A673 (cell line): ENCODE measurements at regions of chr1 and their contacts with region 1.

Region 1: GRCh38 chr1:117895482-117896114 is 33.8 kb downstream of the GDAP2 start:
- DNase-seq: peak; percentile 77
- H3K4me3 ChIP-seq: no peak overlapping the region
- H3K27ac ChIP-seq: no peak overlapping the region
- H3K4me1 ChIP-seq: no peaks in the 10 kb centered on the region
- H3K27me3 ChIP-seq: no peaks in the 10 kb centered on the region
- CTCF ChIP-seq: peak; percentile 83

Region 2: DNA sequence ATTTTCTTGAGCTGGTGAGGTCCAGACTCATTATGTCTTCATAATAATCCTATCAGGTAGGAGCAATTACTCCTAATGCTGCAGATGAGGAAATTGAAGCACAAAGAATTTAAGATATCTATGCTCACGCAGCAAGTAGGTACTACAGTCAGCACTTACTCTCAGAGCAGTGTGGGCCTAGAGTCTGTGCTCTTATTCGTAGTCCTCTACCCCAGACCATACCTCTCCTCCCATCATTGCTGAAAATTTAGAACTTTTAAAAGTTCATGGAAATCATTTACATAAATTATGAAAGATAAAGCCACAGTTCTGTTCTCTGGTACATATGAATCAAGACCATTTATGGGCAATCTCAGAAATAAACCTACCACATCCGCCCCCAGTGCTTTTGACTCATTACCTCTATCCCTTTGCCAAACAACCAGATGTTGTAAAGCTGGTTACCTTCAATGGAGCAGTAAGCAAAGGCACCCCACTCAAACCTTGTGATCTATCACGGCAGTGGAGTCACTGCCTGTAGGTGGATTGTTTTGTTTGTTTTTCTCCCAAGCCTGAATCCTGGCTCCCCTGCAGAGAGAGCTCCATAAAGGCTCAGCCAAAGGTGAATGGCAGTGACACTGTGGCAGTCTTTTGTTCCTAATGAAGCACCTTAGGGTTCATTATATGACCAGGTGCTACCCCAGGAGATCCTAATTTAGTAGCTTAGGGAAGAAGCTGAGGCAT is 549.2 kb before region 1 on chr1:
- CTCF ChIA-PET with region 1: no interaction called
- POLR2A ChIA-PET with region 1: no interaction called
- intact Hi-C with region 1: no loop called
- DNase-seq: no peak
- H3K4me3 ChIP-seq: no peak overlapping the region
- H3K27ac ChIP-seq: no peak overlapping the region
- H3K4me1 ChIP-seq: no peaks in the 10 kb centered on the region
- H3K27me3 ChIP-seq: no peaks in the 10 kb centered on the region
- CTCF ChIP-seq: no peak

Region 3: GRCh38 chr1:117512743-117513321 is 382.8 kb before region 1 on chr1:
- CTCF ChIA-PET with region 1: interaction called, 3 read pairs
- POLR2A ChIA-PET with region 1: interaction called, 6 read pairs
- intact Hi-C with region 1: loop called (anchors 5 kb)
- DNase-seq: peak; percentile 26
- H3K4me3 ChIP-seq: no peak overlapping the region
- H3K27ac ChIP-seq: no peak overlapping the region
- H3K4me1 ChIP-seq: no peaks in the 10 kb centered on the region
- H3K27me3 ChIP-seq: no peaks in the 10 kb centered on the region
- CTCF ChIP-seq: peak; percentile 71

Region 4: GRCh38 chr1:117710710-117711109 is 184.9 kb before region 1 on chr1:
- CTCF ChIA-PET with region 1: no interaction called
- POLR2A ChIA-PET with region 1: no interaction called
- intact Hi-C with region 1: loop called (anchors 5 kb)
- DNase-seq: peak; percentile 31
- H3K4me3 ChIP-seq: no peak overlapping the region
- H3K27ac ChIP-seq: no peak overlapping the region
- H3K4me1 ChIP-seq: no peaks in the 10 kb centered on the region
- H3K27me3 ChIP-seq: no peaks in the 10 kb centered on the region
- CTCF ChIP-seq: peak; percentile 68

Region 5: GRCh38 chr1:117758444-117759316 is 136.9 kb before region 1 on chr1:
- CTCF ChIA-PET with region 1: interaction called, 3 read pairs
- POLR2A ChIA-PET with region 1: no interaction called
- intact Hi-C with region 1: loop called (anchors 5 kb)
- DNase-seq: peak; percentile 86
- H3K4me3 ChIP-seq: peak overlapping the region; percentile 33
- H3K27ac ChIP-seq: no peak overlapping the region
- H3K4me1 ChIP-seq: peaks cover 7% of the 10 kb centered on the region
- H3K27me3 ChIP-seq: no peaks in the 10 kb centered on the region
- CTCF ChIP-seq: peak; percentile 94